CD4-positive, alpha-beta T cell (primary cell): ENCODE measurements at regions of chr19 and their contacts with region 1.

Region 1: DNA sequence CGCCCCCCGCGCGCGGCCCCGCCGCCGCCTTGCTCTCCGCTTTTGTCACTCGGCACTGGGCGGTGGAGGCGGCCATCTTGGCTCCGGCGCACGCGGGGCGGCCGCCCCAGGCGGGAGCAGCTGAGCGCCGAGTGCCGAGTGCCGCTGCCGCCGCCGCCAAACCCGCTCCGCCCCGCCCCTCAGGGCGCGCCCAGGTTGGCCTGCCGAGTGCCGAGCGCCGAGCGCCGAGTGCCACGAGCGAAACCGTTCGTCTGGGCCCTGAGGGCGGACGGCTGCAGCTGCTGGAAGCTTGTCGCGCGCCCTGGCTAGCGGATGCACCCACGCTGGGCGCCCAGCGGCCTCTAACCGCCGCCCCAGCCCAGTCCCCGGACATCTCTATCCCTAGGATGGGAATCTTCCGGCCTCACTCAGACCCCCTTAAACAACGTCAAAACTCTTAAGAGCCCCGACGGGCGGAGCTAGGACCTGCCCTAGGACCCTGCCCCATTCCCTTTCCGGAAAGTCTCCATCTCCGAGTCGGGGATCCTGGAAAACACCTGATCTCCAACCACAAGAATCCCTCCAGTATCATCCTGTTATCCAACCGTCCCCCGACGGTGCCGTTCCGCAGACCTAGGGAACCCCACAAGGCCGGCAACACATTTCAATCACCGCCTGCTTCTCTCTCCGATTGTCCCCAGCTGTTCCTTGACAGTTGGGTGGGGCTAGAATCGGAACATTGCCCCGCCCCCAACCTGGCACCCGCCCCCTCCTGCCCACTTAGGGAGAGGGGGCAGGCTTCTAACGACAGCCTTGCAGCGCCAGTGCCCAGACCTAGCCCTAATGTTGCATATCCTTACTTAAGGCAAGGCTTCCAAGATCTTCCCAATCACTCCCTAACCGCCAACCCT is 14.1 kb upstream of the AKAP8L start:
- DNase-seq: peak; percentile 85 to 97 (median 92)
- ATAC-seq: peak; percentile 94
- H3K4me3 ChIP-seq: peak overlapping the region; percentile 87
- H3K4me3 Mint-ChIP-seq: peak overlapping the region; percentile 90
- H3K27ac ChIP-seq: peak overlapping the region; percentile 40 to 65
- H3K27ac Mint-ChIP-seq: peak overlapping the region; percentile 82
- H3K4me1 ChIP-seq: peaks cover 38% of the 10 kb centered on the region
- H3K4me1 Mint-ChIP-seq: peaks cover 28% of the 10 kb centered on the region
- H3K27me3 ChIP-seq: no peaks in the 10 kb centered on the region
- H3K27me3 Mint-ChIP-seq: no peaks in the 10 kb centered on the region
- CTCF ChIP-seq: no peak

Region 2: DNA sequence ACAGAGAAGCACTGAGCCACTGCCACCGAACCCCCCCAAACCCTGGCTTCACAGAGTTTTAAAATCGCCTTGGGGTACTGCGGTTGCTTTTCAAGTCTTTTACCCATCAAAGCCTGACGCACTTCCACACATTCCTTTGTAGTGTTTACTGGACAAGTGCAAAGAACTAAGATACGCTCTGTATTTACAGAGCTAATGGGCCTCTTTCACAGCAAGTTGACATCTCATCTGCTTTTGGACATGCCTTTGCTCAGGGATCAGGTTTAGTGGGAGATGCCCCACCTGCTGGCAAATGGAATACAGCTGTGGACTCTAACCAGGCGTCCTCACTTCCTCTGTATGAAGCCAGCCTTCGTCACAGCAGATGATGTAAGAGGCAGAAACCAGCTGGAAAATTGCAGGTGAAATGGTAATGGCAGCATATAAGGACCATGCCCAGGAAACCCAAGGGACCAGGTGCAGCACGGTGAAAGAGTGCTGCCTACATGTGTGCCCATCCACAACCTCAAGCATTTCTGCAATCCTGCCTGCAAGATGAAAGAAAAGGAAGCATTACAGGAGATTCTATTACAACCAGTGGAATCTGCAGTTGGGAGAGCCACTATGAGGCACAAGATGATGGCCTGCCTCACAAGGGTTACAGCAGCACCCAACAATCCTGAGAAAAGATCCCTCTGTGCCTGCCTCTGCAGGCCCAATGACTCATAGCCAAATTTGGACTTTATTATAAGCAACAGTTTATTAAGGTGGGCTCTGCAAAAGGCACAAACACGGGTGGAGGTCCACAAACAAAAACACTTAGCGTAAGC is 135.3 kb before region 1 on chr19:
- CTCF ChIA-PET with region 1: no interaction called
- POLR2A ChIA-PET with region 1: no interaction called
- intact Hi-C with region 1: no loop called
- DNase-seq: peak in 4 of 14 experiments; percentile 23 to 53 (median 44)
- ATAC-seq: peak; percentile 52
- H3K4me3 ChIP-seq: no peak overlapping the region
- H3K4me3 Mint-ChIP-seq: peak overlapping the region; percentile 81
- H3K27ac ChIP-seq: no peak overlapping the region
- H3K27ac Mint-ChIP-seq: peak overlapping the region; percentile 64
- H3K4me1 ChIP-seq: peaks cover 89% of the 10 kb centered on the region
- H3K4me1 Mint-ChIP-seq: peaks cover 89% of the 10 kb centered on the region
- H3K27me3 ChIP-seq: no peaks in the 10 kb centered on the region
- H3K27me3 Mint-ChIP-seq: no peaks in the 10 kb centered on the region
- CTCF ChIP-seq: no peak

Region 3: DNA sequence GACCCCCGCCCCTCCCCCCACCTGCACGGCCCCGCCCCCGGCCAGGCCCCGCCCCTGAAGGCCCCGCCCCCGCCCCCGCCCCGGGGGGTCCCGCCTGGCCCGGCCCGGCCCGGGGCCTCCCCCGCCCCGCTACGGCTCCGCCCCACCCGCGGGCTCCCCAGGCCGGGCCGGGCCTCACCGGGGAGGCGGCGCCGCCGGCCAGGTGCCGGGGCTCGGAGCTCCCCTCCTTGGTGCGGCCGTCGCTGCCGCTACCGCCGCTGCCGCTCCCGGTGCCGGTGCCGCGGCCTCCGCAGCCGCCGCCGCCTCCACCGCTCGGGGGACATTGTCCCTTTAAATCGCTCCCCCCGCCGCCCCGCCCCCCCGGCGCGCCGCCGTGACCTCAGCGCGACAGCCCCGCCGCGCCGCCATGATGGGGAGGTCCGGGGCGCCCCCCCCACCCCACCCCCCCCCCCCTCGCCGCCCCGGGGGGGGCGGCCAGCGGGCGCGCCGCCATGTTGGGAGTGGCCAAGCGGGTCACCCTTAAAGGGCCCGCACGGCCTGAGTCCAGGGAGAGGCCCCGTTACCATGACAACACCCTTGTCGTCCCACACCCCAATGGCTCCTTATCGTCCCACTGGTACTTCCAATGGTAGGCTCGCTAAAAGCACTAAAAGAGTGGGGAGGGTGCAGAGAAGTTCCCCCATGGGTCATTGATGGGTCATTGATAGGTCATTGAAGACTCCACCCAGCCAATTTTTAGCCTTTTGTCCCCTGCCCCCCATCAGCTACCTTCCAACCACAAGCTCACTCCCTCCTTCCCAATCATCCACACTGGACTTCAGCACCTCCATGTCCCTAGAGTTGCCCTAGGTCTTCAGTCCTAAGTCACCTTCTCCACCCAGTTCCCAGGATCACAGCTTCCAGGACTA is 17.0 kb after region 1 on chr19 and contains the start of gene WIZ:
- CTCF ChIA-PET with region 1: no interaction called
- POLR2A ChIA-PET with region 1: interaction called, 14 read pairs
- intact Hi-C with region 1: loop called in 1 of 2 experiments (anchors 1 kb)
- DNase-seq: peak; percentile 75 to 92 (median 84)
- ATAC-seq: peak; percentile 83
- H3K4me3 ChIP-seq: peak within 1 kb of the TSS; percentile 47
- H3K4me3 Mint-ChIP-seq: peak within 1 kb of the TSS; percentile 92
- H3K27ac ChIP-seq: peak within 1 kb of the TSS in 1 of 2 donors; percentile 79
- H3K27ac Mint-ChIP-seq: peak within 1 kb of the TSS; percentile 81
- H3K4me1 ChIP-seq: peaks cover 30% of the 10 kb centered on the region
- H3K4me1 Mint-ChIP-seq: peaks cover 30% of the 10 kb centered on the region
- H3K27me3 ChIP-seq: no peaks in the 10 kb centered on the region
- H3K27me3 Mint-ChIP-seq: no peaks in the 10 kb centered on the region
- CTCF ChIP-seq: no peak
- total RNA-seq, gene WIZ: 12.9 to 14.3 TPM